ENCODE measurements at regions of chr1 and their contacts with region 1.

Region 1: DNA sequence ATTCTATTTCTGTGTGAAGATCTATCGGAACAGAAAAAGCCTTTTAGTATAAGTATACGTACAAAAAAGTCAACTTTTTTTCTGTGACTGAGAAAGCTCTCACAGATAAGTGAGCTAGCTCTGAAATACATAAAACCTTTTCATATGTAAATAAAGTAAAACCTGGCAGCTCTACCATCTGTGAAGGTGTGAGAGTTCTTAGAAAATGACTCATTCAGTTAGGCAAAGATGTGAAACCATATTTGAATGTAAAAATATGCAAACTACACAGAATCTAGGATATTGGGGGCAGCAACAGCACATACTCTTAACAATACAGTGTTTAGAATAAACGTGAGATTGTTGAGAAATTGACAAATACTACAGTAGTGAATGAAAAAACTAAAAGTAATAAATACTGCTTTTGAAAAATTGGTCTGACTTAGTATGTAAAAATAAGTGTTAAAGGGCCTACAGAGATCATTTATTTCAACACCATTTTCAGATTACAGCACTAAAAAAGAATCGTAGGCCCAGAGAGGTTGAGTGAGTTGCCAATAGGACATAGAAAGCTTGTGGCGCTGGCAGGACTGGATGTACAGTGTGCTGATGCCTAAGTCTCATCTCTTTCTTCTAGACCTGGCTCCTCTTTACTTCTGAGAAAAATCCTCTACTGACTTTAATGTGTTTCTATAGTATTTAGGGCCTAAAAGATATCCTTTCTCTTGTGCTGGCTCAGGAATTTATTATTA is 19.8 kb downstream of the ATP6V1G3 start:
- DNase-seq: no peak
- H3K4me3 ChIP-seq: peak overlapping the region in 2 of 8 donors; percentile 3 to 56
- H3K27ac ChIP-seq: peak overlapping the region; percentile 38 to 85 (median 68)
- H3K4me1 ChIP-seq: peaks cover 3 to 85% (median 22%) of the 10 kb centered on the region in 6 donors
- H3K27me3 ChIP-seq: no peaks in the 10 kb centered on the region
- CTCF ChIP-seq: no peak
- POLR2A ChIP-seq: no peak

Region 2: DNA sequence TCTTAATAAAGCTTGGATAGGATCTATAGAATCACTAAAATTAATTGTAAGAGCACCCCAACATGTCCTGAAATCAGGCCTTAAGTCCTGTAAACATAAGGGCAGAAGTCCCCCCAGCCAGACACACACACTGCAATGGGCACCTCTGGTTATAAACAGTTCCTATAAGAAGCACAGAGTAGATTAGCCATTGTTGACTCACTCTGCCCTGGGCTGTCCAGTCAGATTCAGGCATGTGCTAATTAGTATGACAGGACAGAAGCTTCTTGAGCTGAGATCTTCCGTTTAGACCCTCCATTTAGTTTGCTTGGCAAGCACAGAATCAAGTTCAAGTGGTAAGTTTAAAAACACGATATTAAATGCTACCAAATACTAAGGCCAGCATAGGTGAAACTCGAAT is 733.6 kb before region 1 on chr1:
- intact Hi-C with region 1: no loop called
- DNase-seq: no peak
- H3K4me3 ChIP-seq: no peak overlapping the region
- H3K27ac ChIP-seq: no peak overlapping the region
- H3K4me1 ChIP-seq: peaks cover 0 to 9% (median 1%) of the 10 kb centered on the region in 6 donors
- H3K27me3 ChIP-seq: no peaks in the 10 kb centered on the region
- CTCF ChIP-seq: no peak
- POLR2A ChIP-seq: no peak

Region 3: DNA sequence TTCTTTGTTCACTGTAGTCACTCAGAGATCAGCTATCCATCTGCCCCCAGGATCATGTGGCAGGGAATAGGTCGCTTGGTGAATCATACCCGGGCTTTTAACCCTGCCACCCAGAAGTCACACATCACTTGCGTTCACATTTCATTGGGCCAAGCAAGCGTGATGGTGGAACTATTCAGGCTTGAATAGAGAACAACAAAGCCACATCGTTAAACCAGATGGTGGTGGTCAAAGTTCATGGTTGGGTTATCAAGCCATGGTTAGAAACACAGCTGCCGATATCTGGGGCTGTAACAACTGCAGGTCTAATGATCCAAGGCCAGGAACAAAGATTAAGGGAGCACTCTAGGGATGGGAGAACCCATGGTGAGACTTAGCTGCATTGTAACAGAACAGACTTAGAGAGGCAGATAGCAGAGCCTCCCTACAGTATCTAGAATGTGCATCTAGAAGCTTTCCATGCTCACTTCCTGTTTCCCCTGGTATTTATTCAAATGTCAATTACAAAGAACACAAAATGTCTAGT is 78.2 kb after region 1 on chr1:
- intact Hi-C with region 1: no loop called
- DNase-seq: peak; percentile 66
- H3K4me3 ChIP-seq: peak overlapping the region in 2 of 8 donors; percentile 24 to 54
- H3K27ac ChIP-seq: peak overlapping the region; percentile 36 to 87 (median 80)
- H3K4me1 ChIP-seq: peaks cover 0 to 81% (median 34%) of the 10 kb centered on the region in 6 donors
- H3K27me3 ChIP-seq: no peaks in the 10 kb centered on the region
- CTCF ChIP-seq: no peak
- POLR2A ChIP-seq: no peak

Region 4: GRCh38 chr1:198699167-198700015 is 178.7 kb after region 1 on chr1:
- intact Hi-C with region 1: loop called (anchors 10 kb)
- DNase-seq: peak; percentile 82
- H3K4me3 ChIP-seq: no peak overlapping the region
- H3K27ac ChIP-seq: peak overlapping the region in 3 of 8 donors; percentile 24 to 57 (median 37)
- H3K4me1 ChIP-seq: peaks cover 5 to 95% (median 59%) of the 10 kb centered on the region in 6 donors
- H3K27me3 ChIP-seq: no peaks in the 10 kb centered on the region
- CTCF ChIP-seq: peak in 8 of 11 experiments; percentile 19 to 60 (median 53)
- POLR2A ChIP-seq: no peak

Region 5: DNA sequence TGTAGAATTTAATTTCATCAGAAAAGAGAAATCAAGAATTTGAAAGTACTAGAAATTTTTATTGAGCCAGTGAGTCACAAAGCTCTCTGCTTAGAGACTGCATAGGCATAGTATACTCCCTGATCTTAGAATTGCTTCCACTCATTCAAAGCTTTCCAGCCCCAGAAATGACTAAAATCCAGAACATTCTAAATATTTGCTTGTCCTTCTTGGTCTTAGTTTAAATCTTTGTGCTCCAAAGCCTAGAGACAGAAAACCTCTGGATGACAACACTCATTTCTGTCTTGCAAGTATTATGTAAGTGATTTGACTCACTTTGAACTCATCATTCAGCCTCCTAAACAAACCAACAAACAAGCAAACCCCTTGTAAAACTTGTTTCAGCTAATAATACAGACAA is 192.4 kb after region 1 on chr1:
- intact Hi-C with region 1: no loop called
- DNase-seq: no peak
- H3K4me3 ChIP-seq: no peak overlapping the region
- H3K27ac ChIP-seq: peak overlapping the region in 2 of 8 donors; percentile 1 to 3
- H3K4me1 ChIP-seq: peaks cover 0 to 34% (median 0%) of the 10 kb centered on the region in 6 donors
- H3K27me3 ChIP-seq: no peaks in the 10 kb centered on the region
- CTCF ChIP-seq: no peak
- POLR2A ChIP-seq: no peak

Region 6: GRCh38 chr1:199007423-199007822 is 486.7 kb after region 1 on chr1:
- intact Hi-C with region 1: no loop called
- DNase-seq: no peak
- H3K4me3 ChIP-seq: no peak overlapping the region
- H3K27ac ChIP-seq: no peak overlapping the region
- H3K4me1 ChIP-seq: peaks cover 8 to 24% (median 19%) of the 10 kb centered on the region in 6 donors
- H3K27me3 ChIP-seq: no peaks in the 10 kb centered on the region
- CTCF ChIP-seq: no peak
- POLR2A ChIP-seq: no peak

Measured in spleen (tissue), 13 donors.